CD4-positive, alpha-beta memory T cell (primary cell): ENCODE measurements at regions of chr3 and their contacts with region 1.

Region 1: DNA sequence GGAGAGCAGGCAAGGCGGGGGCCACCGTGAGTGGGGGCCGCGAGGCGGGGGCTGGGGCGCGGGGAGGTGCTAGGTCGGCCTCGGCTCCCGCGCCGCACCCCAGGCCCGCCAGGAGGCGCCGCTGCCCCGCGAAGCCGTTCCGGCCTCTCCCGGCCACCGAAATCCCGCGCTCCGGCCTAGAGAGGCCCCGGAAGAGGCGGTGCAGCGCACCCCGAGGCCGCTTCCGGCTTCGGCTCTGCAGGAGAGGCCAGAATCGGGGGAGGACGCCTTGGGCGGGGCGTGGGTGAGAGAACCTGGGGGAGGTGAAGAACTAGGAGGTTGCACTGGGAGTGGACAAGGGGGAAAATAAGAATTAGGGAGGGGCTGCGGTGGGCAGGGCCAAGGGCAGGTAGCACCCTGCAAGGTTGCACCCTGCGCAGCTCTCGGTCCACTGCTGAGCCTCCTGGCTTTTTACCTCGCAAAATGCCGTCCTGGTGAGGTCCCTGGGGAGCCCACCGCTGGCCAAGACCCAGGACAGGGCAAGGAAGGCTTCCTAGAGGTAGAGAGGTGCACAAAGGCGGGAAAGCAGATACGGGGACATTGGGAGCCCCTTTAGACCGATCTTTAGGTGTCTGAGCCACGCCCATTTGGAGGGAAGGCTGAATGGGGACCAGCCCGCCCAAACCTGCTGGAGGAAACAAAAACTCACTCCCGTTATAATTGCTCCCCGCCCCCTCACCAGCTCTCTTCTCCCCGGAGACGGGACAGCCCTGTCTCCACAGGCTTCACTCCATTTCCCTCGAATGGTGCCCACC is 8.4 kb upstream of the GNAI2 start:
- DNase-seq: peak; percentile 90 to 92 (median 91)
- H3K4me3 ChIP-seq: peak overlapping the region; percentile 79 to 87
- H3K4me3 Mint-ChIP-seq: peak overlapping the region; percentile 89 to 99 (median 94)
- H3K27ac ChIP-seq: peak overlapping the region; percentile 59
- H3K27ac Mint-ChIP-seq: peak overlapping the region; percentile 92 to 96 (median 95)
- H3K4me1 ChIP-seq: peaks cover 18% of the 10 kb centered on the region
- H3K4me1 Mint-ChIP-seq: peaks cover 15 to 39% (median 30%) of the 10 kb centered on the region in 4 donors
- H3K27me3 ChIP-seq: no peaks in the 10 kb centered on the region
- H3K27me3 Mint-ChIP-seq: peaks cover 0 to 2% of the 10 kb centered on the region in 2 donors

Region 2: DNA sequence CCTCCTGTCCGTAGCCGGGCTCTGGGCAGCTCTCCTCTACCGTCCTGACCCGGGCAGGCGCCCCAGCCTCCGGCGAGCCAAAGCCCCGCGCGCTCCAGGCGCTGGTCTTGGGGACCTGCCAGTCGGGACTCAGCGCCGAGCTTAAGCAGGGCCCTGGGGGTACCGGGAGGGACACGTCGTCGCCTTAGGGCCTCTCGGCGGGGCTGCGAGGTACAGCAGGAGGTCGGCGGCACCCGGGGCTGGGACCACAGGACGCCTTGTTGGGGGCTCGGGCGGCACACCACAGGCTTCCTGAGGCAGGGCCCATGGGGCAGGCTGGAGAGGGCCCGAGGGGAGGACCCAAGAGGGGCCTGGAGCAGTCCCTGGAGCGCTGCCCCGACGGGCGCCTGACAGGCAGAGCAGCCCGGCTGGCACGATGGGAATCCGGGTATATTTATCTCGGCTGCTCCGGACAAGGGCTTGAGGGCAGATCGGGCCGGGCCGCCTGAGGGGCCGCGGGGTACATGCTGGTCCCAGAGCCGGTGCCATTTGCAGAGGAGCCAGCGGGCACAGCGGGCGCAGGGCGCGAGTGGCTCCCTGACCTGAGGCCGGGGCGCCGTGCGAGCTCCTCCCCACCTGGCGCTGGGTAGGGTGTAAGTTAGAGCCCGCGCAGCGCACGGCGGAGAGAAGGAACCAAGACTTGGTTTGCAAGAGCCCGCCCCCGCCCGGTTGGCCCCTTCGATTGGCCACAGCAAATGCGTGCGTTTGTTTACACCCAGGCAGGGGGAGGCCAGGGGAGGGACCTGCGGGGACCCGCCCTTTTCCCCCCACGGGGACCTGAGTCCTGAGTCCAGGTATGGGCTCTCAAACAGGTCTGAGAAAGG is 21.9 kb before region 1 on chr3:
- CTCF ChIA-PET with region 1: interaction called, 17 read pairs
- POLR2A ChIA-PET with region 1: interaction called, 4 read pairs
- intact Hi-C with region 1: no loop called
- DNase-seq: peak in 3 of 5 donors; percentile 16 to 59 (median 21)
- H3K4me3 ChIP-seq: no peak overlapping the region
- H3K4me3 Mint-ChIP-seq: peak overlapping the region in 5 of 8 donors; percentile 9 to 41 (median 21)
- H3K27ac ChIP-seq: no peak overlapping the region
- H3K27ac Mint-ChIP-seq: no peak overlapping the region
- H3K4me1 ChIP-seq: peaks cover 13% of the 10 kb centered on the region
- H3K4me1 Mint-ChIP-seq: peaks cover 0 to 4% (median under 1%) of the 10 kb centered on the region in 4 donors
- H3K27me3 ChIP-seq: peaks cover 23% of the 10 kb centered on the region
- H3K27me3 Mint-ChIP-seq: peaks cover 34 to 35% of the 10 kb centered on the region in 2 donors

Region 3: GRCh38 chr3:50245831-50246516 is 18.4 kb after region 1 on chr3:
- CTCF ChIA-PET with region 1: interaction called, 238 read pairs
- POLR2A ChIA-PET with region 1: interaction called, 150 read pairs
- intact Hi-C with region 1: loop called (anchors 1 kb)
- DNase-seq: peak; percentile 89 to 94 (median 92)
- H3K4me3 ChIP-seq: peak overlapping the region; percentile 24 to 44
- H3K4me3 Mint-ChIP-seq: peak overlapping the region; percentile 75 to 88 (median 80)
- H3K27ac ChIP-seq: peak overlapping the region; percentile 76
- H3K27ac Mint-ChIP-seq: peak overlapping the region; percentile 92 to 98 (median 95)
- H3K4me1 ChIP-seq: peaks cover 97% of the 10 kb centered on the region
- H3K4me1 Mint-ChIP-seq: peaks cover 44 to 89% (median 71%) of the 10 kb centered on the region in 4 donors
- H3K27me3 ChIP-seq: no peaks in the 10 kb centered on the region
- H3K27me3 Mint-ChIP-seq: no peaks in the 10 kb centered on the region

Region 4: DNA sequence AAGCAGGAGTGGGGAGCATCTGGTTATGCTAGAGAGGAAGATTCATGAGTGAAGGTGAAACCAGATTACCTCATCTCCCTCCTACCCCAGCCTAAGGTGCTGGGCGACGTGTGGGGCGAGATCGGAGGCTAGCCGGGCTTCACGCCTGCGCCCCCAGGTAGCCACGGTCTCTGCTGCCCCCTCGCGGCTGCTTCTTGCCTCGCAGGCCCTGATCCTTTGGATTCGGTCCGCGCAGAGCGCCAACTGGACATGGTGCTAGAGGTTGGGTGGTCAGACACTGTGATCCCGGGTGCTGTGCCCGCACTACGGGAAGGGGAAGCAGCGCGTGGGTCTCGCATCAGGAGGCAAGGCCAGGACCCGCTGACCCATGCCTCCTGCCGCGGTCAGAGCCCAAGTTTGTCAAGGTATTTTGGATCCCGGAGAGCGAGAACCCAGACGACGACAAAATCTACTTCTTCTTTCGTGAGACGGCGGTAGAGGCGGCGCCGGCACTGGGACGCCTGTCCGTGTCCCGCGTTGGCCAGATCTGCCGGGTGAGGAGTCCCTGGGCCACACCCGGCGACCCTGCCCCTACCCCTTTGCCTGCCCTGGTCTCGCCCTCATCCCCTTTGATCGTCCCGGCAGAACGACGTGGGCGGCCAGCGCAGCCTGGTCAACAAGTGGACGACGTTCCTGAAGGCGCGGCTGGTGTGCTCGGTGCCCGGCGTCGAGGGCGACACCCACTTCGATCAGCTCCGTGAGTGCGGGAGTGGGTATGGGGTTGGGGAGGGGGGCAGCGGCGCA is 45.5 kb after region 1 on chr3:
- CTCF ChIA-PET with region 1: interaction called, 36 read pairs
- POLR2A ChIA-PET with region 1: interaction called, 3 read pairs
- intact Hi-C with region 1: loop called (anchors 1 kb)
- DNase-seq: peak; percentile 73 to 83 (median 79)
- H3K4me3 ChIP-seq: no peak overlapping the region
- H3K4me3 Mint-ChIP-seq: peak overlapping the region; percentile 35 to 81 (median 74)
- H3K27ac ChIP-seq: no peak overlapping the region
- H3K27ac Mint-ChIP-seq: peak overlapping the region in 3 of 7 donors; percentile 9 to 88 (median 53)
- H3K4me1 ChIP-seq: peaks cover 35% of the 10 kb centered on the region
- H3K4me1 Mint-ChIP-seq: peaks cover 14 to 37% (median 25%) of the 10 kb centered on the region in 4 donors
- H3K27me3 ChIP-seq: peaks cover 35% of the 10 kb centered on the region
- H3K27me3 Mint-ChIP-seq: peaks cover 23 to 31% of the 10 kb centered on the region in 2 donors

Region 5: GRCh38 chr3:50321336-50322114 is 93.9 kb after region 1 on chr3:
- CTCF ChIA-PET with region 1: interaction called, 3 read pairs
- POLR2A ChIA-PET with region 1: no interaction called
- intact Hi-C with region 1: loop called (anchors 2 kb)
- DNase-seq: peak; percentile 80 to 88 (median 83)
- H3K4me3 ChIP-seq: peak overlapping the region; percentile 23 to 87
- H3K4me3 Mint-ChIP-seq: peak overlapping the region; percentile 80 to 90 (median 86)
- H3K27ac ChIP-seq: peak overlapping the region; percentile 73
- H3K27ac Mint-ChIP-seq: peak overlapping the region; percentile 90 to 95 (median 93)
- H3K4me1 ChIP-seq: peaks cover 38% of the 10 kb centered on the region
- H3K4me1 Mint-ChIP-seq: peaks cover 18 to 57% (median 38%) of the 10 kb centered on the region in 4 donors
- H3K27me3 ChIP-seq: no peaks in the 10 kb centered on the region
- H3K27me3 Mint-ChIP-seq: no peaks in the 10 kb centered on the region